ENCODE measurements at regions of chrX and their contacts with region 1.

Region 1: DNA sequence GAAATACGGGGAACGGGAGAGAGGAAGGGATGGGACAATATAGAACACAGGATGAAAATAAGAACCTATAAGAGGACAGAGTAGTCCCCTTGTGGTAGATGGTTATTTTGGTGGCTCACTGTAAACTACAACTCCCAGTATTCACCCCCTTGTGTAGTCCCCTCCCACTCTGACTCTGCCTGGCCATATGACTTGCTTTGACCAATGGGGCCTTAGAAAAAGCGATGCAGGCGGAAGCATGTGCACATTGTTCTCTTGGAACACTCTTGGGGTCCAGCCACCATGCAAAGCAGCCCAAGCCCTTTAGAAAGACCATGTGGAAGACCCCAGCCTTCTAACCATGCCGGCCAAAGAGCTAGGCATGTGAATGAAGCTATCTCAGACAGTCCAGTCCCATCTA is 415.0 kb downstream of the BCOR start:
- DNase-seq: no peak
- ATAC-seq: no peak

Region 2: GRCh38 chrX:39470588-39471407 is 212.0 kb before region 1 on chrX:
- intact Hi-C with region 1: loop called (anchors 5 kb)
- DNase-seq: no peak
- ATAC-seq: peak; percentile 68

Region 3: GRCh38 chrX:39645178-39645895 is 37.4 kb before region 1 on chrX:
- intact Hi-C with region 1: no loop called
- DNase-seq: peak; percentile 83
- ATAC-seq: peak; percentile 90

Region 4: GRCh38 chrX:40201329-40201885 is 518.6 kb after region 1 on chrX:
- intact Hi-C with region 1: no loop called
- DNase-seq: no peak
- ATAC-seq: no peak

Region 5: DNA sequence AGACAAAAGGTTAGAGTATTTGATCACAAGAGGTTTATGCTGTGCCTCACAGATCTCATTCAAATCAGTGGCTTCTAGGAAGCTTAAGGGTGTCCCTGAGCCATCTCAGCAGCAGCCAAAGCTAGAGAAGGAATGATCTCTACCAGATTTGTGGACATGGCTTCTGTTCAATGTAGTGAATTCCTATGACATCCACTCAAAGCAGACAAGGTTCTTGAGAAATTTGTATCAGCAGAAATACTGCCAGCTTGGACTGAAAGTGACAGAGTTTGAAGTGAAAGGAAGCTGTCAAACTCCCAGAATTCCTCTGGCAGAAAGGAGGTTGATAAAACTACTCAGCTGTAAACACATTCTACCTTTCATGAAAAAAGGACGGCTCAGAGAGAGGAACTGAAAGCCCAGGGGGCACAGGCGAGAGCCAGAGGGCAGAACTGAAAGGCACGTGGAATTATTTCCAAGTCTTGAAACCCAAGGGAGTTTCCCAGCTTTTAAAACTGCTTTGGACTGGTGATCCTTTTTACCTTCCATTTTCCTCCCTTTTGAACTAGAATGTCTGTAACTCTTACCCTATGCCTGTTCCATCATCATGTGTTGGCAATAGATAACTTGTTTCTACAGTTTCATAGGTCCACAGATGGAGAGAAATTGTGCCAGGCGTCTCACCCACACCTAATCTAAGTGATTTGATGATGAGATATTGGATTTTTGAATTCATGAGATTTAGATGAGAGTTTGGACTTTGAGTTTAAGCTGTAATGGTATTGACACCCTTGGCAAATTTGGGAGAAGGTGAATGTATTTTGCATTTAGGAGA is 1067.1 kb after region 1 on chrX:
- intact Hi-C with region 1: no loop called
- DNase-seq: no peak
- ATAC-seq: peak; percentile 46